ENCODE measurements at regions of chr14 and their contacts with region 1.

Region 1: DNA sequence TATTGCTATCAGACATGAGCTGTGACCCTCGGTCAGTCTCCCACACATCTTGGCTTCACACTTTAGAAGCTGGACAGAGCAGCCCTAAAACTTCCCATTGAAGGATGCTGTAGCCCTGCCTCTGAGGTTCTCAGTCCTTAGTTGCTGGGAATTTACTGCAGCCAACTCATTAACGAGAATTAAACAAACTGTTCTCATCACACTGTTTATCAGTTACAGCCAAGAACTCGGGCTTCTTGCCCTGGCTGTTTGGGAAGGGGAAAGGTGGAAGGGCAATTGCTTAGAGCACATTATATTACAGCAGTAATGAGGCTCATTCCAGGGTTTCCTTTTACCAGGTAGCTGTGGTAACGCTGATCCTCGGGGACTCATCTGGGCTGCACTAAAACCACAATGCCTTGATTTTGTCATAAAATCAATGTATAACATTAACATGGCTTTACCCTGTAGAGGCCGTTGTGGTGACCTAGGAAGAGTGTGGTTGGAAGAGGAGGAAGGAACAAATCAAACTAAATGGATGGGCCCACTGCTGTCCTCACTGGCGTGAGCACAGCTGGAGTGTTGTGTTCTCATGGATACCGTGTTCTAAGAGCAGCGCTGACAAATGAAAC is 87.1 kb downstream of the GPR135 start:
- DNase-seq: no peak
- ATAC-seq: peak; percentile 74

Region 2: DNA sequence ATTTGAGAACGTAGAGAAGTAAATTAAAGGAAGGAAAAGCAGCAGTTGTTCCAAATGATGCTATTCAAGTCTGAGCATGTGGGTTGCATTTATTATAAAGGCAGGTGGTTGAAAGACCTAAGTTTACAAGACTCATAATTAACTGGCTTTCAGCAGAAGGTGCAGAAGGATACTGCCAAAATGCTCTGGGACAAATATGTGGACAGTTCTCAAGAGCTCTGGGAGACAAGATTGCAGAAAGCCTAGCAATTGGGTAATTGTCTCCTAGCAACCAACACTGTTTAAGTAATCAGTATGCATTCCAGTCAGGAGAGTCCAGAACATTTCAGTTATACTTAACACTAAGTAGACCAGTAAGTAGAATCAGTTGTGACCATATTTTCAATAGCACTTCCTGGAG is 44.4 kb before region 1 on chr14:
- intact Hi-C with region 1: no loop called
- DNase-seq: no peak
- ATAC-seq: peak; percentile 90

Region 3: GRCh38 chr14:59422069-59422881 is 44.2 kb after region 1 on chr14:
- intact Hi-C with region 1: loop called (anchors 5 kb)
- DNase-seq: no peak
- ATAC-seq: no peak

Region 4: DNA sequence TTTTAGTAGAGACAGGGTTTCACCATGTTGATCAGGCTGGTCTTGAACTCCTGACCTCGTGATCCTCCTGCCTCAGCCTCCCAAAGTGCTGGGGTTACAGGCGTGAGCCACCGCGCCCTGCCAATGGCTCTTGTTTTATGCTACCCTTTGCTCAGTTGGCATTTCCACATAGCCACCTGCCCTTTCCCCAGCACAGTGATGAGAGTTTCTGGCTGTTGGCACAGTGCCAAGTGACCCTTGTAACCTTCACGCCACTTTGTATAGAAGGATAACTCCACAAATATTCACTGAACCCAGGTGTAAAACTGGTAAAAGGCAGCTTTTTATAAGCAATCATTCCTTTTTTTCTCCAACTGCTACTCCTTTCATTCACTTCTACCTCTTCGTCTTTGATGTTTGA is 217.0 kb after region 1 on chr14:
- intact Hi-C with region 1: no loop called
- DNase-seq: no peak
- ATAC-seq: no peak

Measured in Right ventricle myocardium superior (tissue), 1 donor.